BJ (cell line): ENCODE measurements at regions of chr13 and their contacts with region 1.

Region 1: DNA sequence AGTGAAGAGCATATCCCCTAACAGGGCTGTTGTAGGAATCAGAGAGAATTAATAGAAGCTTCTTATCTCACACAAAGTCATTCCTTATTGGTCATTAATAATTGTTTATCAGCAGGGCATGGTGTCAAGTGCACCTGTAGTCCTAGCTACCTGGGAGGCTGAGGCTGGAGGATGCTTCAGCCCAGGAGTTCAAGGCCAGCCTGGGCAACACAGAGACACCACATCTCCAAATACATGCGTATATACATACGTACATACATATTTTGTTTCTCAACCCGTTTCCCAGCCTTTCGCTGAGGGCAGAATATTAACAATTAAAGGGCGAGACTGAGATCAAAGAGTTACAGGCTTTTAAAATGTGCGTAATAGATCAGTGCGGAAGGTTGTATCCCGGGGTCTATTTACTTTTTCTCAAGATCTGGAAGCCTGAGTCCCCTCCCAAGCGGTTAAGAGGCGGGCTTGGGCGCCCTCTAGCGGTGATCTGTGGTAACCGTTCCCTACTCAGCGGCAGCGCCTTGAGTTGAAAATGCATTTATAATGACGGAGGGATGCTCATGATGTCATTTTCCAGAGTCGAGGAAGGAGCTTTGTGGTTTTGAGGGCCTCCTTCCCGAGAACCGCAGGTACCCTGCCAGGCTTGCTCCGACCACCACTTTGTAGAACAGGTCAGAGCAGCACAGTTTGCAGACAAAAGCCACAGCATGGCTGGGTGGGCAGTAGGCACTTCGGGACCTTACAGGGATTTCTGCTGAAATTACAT is 169.6 kb upstream of the GPR12 start:
- DNase-seq: no peak
- H3K4me3 ChIP-seq: no peak overlapping the region
- H3K27me3 ChIP-seq: peaks cover 14% of the 10 kb centered on the region
- CTCF ChIP-seq: peak; percentile 95

Region 2: GRCh38 chr13:26914624-26915023 is 15.5 kb before region 1 on chr13:
- CTCF ChIA-PET with region 1: interaction called, 13 read pairs
- POLR2A ChIA-PET with region 1: no interaction called
- DNase-seq: no peak
- H3K4me3 ChIP-seq: no peak overlapping the region
- H3K27me3 ChIP-seq: peaks cover 10% of the 10 kb centered on the region
- CTCF ChIP-seq: no peak